Psoas muscle (tissue), 8 donors: ENCODE measurements at regions of chr18 and their contacts with region 1.

Region 1: GRCh38 chr18:51029694-51030536 is at the start of gene SMAD4:
- DNase-seq: peak; percentile 96 to 99
- ATAC-seq: peak; percentile 93 to 96 (median 94)
- H3K4me3 ChIP-seq: peak within 1 kb of the TSS; percentile 74
- H3K27ac ChIP-seq: peak within 1 kb of the TSS; percentile 98
- H3K4me1 ChIP-seq: peaks cover 47% of the 10 kb centered on the region
- H3K27me3 ChIP-seq: no peaks in the 10 kb centered on the region
- CTCF ChIP-seq: no peak
- total RNA-seq, gene SMAD4: 92.7 to 128 (median 112) TPM

Region 2: GRCh38 chr18:50878345-50879301 is 151.3 kb before region 1 on chr18 and contains the start of gene ME2:
- intact Hi-C with region 1: loop called in 1 of 2 experiments (anchors 10 kb)
- DNase-seq: peak; percentile 91 to 95
- ATAC-seq: peak; percentile 98 to 99 (median 98)
- H3K4me3 ChIP-seq: peak within 1 kb of the TSS; percentile 99
- H3K27ac ChIP-seq: peak within 1 kb of the TSS; percentile 90
- H3K4me1 ChIP-seq: peaks cover 14% of the 10 kb centered on the region
- H3K27me3 ChIP-seq: no peaks in the 10 kb centered on the region
- CTCF ChIP-seq: no peak
- total RNA-seq, gene ME2: 31.0 to 63.8 (median 52.3) TPM

Region 3: GRCh38 chr18:50967714-50968661 is 61.9 kb before region 1 on chr18 and contains the start of gene ELAC1:
- intact Hi-C with region 1: loop called (anchors 1 to 5 kb)
- DNase-seq: peak; percentile 83 to 90
- ATAC-seq: peak; percentile 93 to 97 (median 95)
- H3K4me3 ChIP-seq: peak within 1 kb of the TSS; percentile 89
- H3K27ac ChIP-seq: peak within 1 kb of the TSS; percentile 97
- H3K4me1 ChIP-seq: peaks cover 23% of the 10 kb centered on the region
- H3K27me3 ChIP-seq: no peaks in the 10 kb centered on the region
- CTCF ChIP-seq: peak; percentile 5
- total RNA-seq, gene ELAC1: 2.8 to 5.4 (median 3.8) TPM

Region 4: GRCh38 chr18:50973367-50974126 is 56.4 kb before region 1 on chr18:
- intact Hi-C with region 1: loop called (anchors 1 to 5 kb)
- DNase-seq: no peak
- ATAC-seq: peak; percentile 93 to 94 (median 94)
- H3K4me3 ChIP-seq: peak overlapping the region; percentile 20
- H3K27ac ChIP-seq: peak overlapping the region; percentile 77
- H3K4me1 ChIP-seq: peaks cover 29% of the 10 kb centered on the region
- H3K27me3 ChIP-seq: no peaks in the 10 kb centered on the region
- CTCF ChIP-seq: no peak

Region 5: GRCh38 chr18:50992351-50992762 is 37.6 kb before region 1 on chr18:
- intact Hi-C with region 1: loop called in 1 of 2 experiments (anchors 5 kb)
- DNase-seq: no peak
- ATAC-seq: no peak
- H3K4me3 ChIP-seq: no peak overlapping the region
- H3K27ac ChIP-seq: peak overlapping the region; percentile 12
- H3K4me1 ChIP-seq: peaks cover 44% of the 10 kb centered on the region
- H3K27me3 ChIP-seq: no peaks in the 10 kb centered on the region
- CTCF ChIP-seq: no peak

Region 6: GRCh38 chr18:51188024-51188701 is 158.2 kb after region 1 on chr18:
- intact Hi-C with region 1: loop called in 1 of 2 experiments (anchors 10 kb)
- DNase-seq: no peak
- ATAC-seq: no peak
- H3K4me3 ChIP-seq: no peak overlapping the region
- H3K27ac ChIP-seq: no peak overlapping the region
- H3K4me1 ChIP-seq: peaks cover 26% of the 10 kb centered on the region
- H3K27me3 ChIP-seq: no peaks in the 10 kb centered on the region
- CTCF ChIP-seq: no peak

Region 7: GRCh38 chr18:51266773-51267172 is 236.9 kb after region 1 on chr18:
- intact Hi-C with region 1: no loop called
- DNase-seq: no peak
- ATAC-seq: no peak
- H3K4me3 ChIP-seq: no peak overlapping the region
- H3K27ac ChIP-seq: no peak overlapping the region
- H3K4me1 ChIP-seq: no peaks in the 10 kb centered on the region
- H3K27me3 ChIP-seq: no peaks in the 10 kb centered on the region
- CTCF ChIP-seq: no peak